ENCODE measurements at regions of chr5 and their contacts with region 1.

Region 1: GRCh38 chr5:172714491-172715421 is 56.2 kb downstream of the DUSP1 start:
- DNase-seq: no peak
- H3K4me3 ChIP-seq: no peak overlapping the region
- H3K27me3 ChIP-seq: no peaks in the 10 kb centered on the region; the same call in 1 of the 2 replicates
- CTCF ChIP-seq: peak; percentile 91

Region 2: GRCh38 chr5:172697123-172698121 is 17.3 kb before region 1 on chr5:
- CTCF ChIA-PET with region 1: interaction called, 62 read pairs
- POLR2A ChIA-PET with region 1: no interaction called
- DNase-seq: no peak
- H3K4me3 ChIP-seq: peak overlapping the region; percentile 66
- H3K27me3 ChIP-seq: peaks cover 16% of the 10 kb centered on the region
- CTCF ChIP-seq: peak; percentile 92

Region 3: GRCh38 chr5:172764849-172765765 is 50.4 kb after region 1 on chr5:
- CTCF ChIA-PET with region 1: interaction called, 92 read pairs
- POLR2A ChIA-PET with region 1: no interaction called
- DNase-seq: peak; percentile 99
- H3K4me3 ChIP-seq: peak overlapping the region; percentile 35
- H3K27me3 ChIP-seq: no peaks in the 10 kb centered on the region
- CTCF ChIP-seq: no peak

Region 4: DNA sequence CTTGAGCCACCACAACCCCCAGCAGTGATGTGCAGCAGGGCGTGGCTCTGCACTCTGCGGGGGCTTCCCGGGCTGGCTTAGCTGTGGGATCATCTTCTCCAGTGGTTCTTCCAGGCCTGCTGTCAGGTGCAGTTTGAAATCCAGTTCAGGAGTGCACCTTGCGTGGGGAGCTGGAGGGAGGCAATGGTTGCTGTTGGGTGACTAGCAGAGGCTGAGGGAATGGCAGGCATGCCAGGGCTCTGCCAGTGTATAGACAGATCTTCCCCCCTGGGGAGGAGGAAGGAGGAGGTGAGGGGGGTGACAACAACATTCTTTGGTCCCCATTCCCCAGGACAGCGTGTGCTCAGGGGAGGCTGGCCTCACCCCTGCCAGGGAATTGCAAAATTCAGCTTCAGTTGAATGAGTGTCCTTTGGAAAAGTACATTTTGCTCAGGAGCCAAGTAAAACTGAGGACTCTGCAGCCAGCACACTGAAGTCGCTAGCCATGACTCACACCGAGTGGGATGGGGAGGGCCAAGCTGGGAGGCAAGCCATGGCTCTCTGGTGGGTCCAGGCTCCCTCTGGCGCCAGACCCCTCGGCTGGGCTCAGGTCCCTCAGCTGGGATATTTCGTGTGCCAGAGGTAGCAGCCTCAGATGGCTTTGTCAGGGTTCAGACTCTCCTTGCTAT is 154.3 kb after region 1 on chr5:
- CTCF ChIA-PET with region 1: interaction called, 13 read pairs
- POLR2A ChIA-PET with region 1: no interaction called
- DNase-seq: peak; percentile 81
- H3K4me3 ChIP-seq: no peak overlapping the region
- H3K27me3 ChIP-seq: no peaks in the 10 kb centered on the region
- CTCF ChIP-seq: peak; percentile 51

Region 5: DNA sequence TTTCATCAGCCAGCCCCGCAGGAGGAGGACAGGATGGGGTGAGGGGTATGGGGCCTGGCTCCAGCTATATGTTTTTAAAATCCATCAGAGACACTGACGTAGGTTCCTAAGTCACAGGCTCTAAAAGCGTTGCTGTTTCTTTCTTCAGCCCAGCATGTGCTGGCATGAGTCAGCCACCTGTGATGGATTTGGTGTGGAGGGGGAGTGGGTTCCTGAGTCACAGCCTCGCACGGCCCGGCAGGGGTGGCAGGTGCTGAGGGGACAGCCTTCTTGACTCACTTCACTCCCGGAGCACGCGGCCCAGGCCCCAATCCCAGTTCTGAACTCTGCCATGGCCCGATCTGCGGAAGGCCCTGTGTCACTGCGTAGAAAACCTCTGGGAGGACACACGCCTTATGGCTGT is 205.7 kb after region 1 on chr5:
- CTCF ChIA-PET with region 1: interaction called, 441 read pairs
- POLR2A ChIA-PET with region 1: no interaction called
- DNase-seq: peak; percentile 82
- H3K4me3 ChIP-seq: no peak overlapping the region
- H3K27me3 ChIP-seq: no peaks in the 10 kb centered on the region
- CTCF ChIP-seq: no peak

Region 6: DNA sequence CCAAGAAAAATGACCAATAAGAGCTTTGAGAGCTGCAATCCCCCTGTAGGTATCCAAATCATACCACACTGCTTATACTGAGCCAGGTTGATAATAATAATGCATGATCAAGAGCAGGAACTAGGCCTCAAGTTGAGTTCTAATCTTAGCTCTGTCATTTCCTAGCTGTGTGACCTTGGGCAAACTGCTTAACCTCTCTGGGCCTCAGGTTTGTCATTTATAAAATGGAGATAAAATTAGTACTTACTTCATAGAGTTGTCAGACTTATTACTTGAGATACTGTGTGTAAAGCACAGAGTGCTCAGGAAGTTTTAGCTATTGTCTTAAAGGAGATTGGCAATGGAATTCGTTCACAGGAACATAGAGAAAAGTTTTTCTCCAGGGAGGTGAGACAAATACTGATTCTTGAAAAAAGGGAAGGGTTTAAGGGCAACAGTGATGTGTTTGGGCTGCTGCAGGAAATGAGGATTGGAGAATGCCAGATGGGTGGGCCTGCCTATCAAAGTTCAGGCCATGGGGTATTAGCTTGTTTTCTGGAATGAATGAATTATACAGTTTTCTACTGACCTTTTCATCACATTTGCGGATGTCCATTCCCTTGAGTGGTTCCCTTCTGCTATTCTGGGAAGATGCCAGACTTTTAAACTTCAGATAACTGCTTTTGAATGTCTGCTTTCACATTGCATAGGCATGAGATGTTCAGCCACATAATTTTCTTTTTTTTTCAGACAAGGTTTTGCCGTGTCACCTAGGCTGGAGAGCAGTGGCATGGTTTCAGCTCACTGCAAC is 258.6 kb after region 1 on chr5:
- CTCF ChIA-PET with region 1: interaction called, 25 read pairs
- POLR2A ChIA-PET with region 1: no interaction called
- DNase-seq: no peak
- H3K4me3 ChIP-seq: no peak overlapping the region
- H3K27me3 ChIP-seq: no peaks in the 10 kb centered on the region
- CTCF ChIP-seq: no peak

Region 7: DNA sequence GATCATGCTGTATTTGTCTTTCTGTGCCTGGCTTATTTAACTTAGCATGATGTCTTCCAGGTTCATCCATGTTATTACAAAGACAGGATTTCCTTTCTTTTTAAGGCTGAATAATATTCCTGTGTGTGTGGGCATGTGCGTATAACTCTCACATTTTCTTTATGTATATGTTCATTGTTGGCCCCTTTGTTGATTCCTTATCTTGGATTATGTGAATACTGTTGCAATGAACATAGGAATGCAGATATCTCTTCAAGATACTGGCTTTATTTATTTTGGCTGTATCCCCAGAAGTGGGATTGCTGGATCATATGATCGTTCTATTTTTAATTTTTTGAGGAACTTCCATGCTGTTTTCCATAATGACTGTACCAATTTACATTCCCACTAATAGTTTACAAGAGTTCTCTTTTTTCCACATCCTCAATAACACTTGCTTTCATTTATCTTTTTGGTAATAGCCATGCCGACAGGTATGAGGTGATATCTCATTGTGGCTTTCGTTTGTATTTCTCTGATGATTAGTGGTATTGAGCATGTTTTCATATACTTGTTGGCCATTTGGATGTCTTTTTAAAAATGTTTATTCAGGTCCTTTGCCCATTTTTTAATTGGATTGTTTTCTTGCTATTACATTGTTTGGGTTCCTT is 379.4 kb after region 1 on chr5:
- CTCF ChIA-PET with region 1: no interaction called
- POLR2A ChIA-PET with region 1: no interaction called
- DNase-seq: peak; percentile 37
- H3K4me3 ChIP-seq: no peak overlapping the region
- H3K27me3 ChIP-seq: no peaks in the 10 kb centered on the region
- CTCF ChIP-seq: no peak